OCI-LY7 (cell line): ENCODE measurements at regions of chr19 and their contacts with region 1.

Region 1: GRCh38 chr19:3035542-3036118 is 6.5 kb upstream of the TLE2 start:
- DNase-seq: peak; percentile 100
- H3K4me3 ChIP-seq: peak overlapping the region; percentile 74
- H3K27ac ChIP-seq: peak overlapping the region; percentile 67
- H3K4me1 ChIP-seq: peaks cover 15% of the 10 kb centered on the region
- CTCF ChIP-seq: no peak

Region 2: DNA sequence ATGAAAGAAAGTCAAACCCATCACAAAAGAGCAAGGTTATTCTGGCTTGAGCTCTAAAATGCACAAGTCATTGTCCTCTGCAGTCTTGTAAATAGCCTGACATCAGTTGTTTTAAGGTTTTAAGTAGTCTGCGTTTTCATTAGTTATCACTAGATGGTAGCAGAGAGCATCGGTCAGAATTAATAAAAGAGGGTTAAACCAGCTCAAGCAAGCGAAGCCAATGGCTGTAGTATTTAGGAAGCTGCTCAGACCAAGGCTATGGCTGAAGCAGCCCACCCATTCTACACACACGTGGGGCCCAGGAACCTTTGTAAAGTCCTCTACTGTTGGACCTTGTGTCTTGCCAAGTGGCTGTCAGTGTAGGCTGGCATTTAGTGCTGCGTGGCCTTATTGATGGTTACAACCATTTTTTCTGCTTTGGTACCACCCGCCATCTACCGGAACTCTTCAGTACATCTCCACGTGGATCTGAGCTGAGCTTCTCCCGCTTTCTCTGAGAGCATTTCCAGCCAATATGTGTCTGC is 148.2 kb before region 1 on chr19:
- CTCF ChIA-PET with region 1: no interaction called
- POLR2A ChIA-PET with region 1: no interaction called
- intact Hi-C with region 1: no loop called
- DNase-seq: peak; percentile 82
- H3K4me3 ChIP-seq: no peak overlapping the region
- H3K27ac ChIP-seq: peak overlapping the region; percentile 74
- H3K4me1 ChIP-seq: peaks cover 33% of the 10 kb centered on the region
- CTCF ChIP-seq: peak; percentile 84

Region 3: GRCh38 chr19:2969104-2969504 is 66.5 kb before region 1 on chr19:
- CTCF ChIA-PET with region 1: interaction called, 5 read pairs
- POLR2A ChIA-PET with region 1: interaction called, 12 read pairs
- intact Hi-C with region 1: loop called (anchors 1 kb)
- DNase-seq: peak; percentile 94
- H3K4me3 ChIP-seq: peak overlapping the region; percentile 35
- H3K27ac ChIP-seq: peak overlapping the region; percentile 98
- H3K4me1 ChIP-seq: peaks cover 67% of the 10 kb centered on the region
- CTCF ChIP-seq: 0 out of 2 replicates have a peak, but pooled peaks have one; percentile 23

Region 4: DNA sequence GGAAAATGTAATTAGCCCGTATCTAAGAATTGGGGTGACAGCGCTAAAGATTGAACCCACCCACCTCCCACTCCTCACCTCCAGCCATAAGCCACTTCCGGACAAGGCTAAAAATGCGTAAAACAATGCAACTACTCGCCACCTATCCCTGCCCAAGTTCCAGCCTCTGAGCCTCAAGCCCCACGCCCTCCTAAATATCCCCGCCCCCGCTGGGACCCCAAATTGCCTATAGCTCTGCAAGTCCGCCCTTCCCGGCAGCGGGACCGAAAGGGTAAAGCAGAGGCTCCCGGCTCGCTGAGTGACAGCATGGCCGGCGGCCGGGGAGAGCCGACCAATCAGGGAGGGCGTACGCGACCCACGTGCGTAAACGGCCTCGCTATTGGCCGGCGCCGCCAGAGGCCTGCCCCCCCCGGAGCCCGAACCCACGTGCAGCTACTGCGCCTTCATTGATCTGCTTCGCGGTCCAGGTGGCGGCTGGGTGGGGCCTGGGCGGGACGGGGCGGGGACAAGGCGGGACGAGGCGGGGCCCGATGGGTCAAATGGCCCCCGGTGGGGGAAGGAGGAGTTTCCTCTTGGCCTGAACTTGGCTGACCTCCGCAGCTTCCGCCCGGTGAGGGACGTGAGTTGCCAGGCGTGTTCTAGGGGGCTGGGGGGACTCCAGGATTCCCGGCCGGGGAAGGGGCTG is 58.5 kb before region 1 on chr19 and contains the start of gene TLE6:
- CTCF ChIA-PET with region 1: interaction called, 7 read pairs
- POLR2A ChIA-PET with region 1: interaction called, 12 read pairs
- intact Hi-C with region 1: loop called (anchors 1 kb)
- DNase-seq: peak; percentile 99
- H3K4me3 ChIP-seq: peak within 1 kb of the TSS; percentile 73
- H3K27ac ChIP-seq: peak within 1 kb of the TSS; percentile 38
- H3K4me1 ChIP-seq: peaks cover 39% of the 10 kb centered on the region
- CTCF ChIP-seq: no peak
- total RNA-seq, gene TLE6: 15.9 and 16.4 TPM in 2 replicates

Region 5: GRCh38 chr19:3065675-3066357 is 30.2 kb after region 1 on chr19:
- CTCF ChIA-PET with region 1: no interaction called
- POLR2A ChIA-PET with region 1: interaction called, 5 read pairs
- intact Hi-C with region 1: loop called (anchors 1 kb)
- DNase-seq: peak; percentile 91
- H3K4me3 ChIP-seq: peak overlapping the region; percentile 27
- H3K27ac ChIP-seq: peak overlapping the region; percentile 92
- H3K4me1 ChIP-seq: peaks cover 65% of the 10 kb centered on the region
- CTCF ChIP-seq: no peak